HEK293 (cell line): ENCODE measurements at regions of chr16 and their contacts with region 1.

Region 1: GRCh38 chr16:15782573-15783365 is 74.1 kb downstream of the MYH11 start:
- H3K4me3 ChIP-seq: no peak overlapping the region
- H3K27ac ChIP-seq: no peak overlapping the region
- H3K4me1 ChIP-seq: no peaks in the 10 kb centered on the region
- CTCF ChIP-seq: no peak

Region 2: DNA sequence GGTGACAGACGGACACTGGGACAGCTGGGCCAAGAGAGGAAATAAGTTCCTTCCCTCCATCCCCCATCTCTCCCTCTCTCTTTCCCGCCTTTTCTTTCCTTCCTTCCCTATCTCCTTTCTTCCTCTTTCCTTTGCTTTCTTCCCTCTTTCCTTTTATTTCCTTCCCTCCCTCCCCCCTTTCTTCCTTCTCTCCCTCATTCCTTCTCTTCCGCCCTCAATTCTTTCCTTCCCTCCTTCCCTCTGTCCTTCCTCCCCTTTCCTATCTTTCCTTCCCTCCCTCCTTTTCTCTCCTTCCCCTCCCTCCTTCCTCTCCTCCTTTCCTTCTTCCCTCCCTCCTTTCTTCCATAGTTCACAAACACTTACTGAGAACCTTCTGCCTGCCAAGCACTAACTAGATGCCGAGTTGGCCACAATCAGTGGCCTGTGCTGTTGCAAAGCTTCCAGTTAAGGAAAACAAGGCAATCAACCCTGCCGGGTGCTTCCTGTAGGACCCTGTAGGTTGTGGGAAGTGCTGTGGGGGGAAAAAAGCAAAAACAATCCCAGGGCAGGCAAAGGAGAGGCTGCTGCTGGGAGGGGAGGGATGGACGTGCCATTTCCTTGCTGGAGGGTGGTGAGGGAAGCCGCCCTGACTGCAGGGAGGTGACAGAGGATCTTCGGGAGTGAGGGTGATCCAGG is 408.9 kb after region 1 on chr16:
- CTCF ChIA-PET with region 1: interaction called, 5 read pairs
- POLR2A ChIA-PET with region 1: interaction called, 11 read pairs
- H3K4me3 ChIP-seq: no peak overlapping the region
- H3K27ac ChIP-seq: no peak overlapping the region
- H3K4me1 ChIP-seq: no peaks in the 10 kb centered on the region
- CTCF ChIP-seq: no peak